ENCODE measurements at regions of chr3 and their contacts with region 1.

Region 1: DNA sequence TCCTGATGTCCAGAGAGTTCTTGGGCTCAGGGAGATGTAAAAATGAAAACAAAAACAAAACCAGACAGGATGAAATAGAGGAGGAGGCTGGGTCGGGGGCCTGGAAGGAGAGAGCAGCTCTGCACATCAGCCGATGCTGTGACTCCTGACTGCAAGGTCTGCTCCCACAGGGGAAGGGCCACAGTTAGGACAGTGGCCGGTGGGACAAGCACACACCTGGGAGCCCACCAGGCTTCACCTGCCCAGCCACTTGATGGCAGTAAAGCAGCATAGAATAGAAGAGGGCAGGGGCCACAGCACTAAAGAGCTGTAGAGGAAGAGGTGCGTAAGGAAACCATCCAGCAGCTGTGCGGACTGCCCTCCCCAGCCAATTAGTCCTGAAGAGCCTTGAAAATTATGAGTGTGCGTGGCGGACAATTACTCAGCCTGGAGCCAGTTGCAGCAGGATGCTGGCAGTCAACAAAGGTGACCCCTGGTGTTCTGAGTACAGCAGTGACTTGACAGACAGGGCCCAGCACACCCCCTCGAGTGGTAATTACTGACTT is 29.8 kb downstream of the ALS2CL start:
- DNase-seq: peak in 4 of 5 donors; percentile 17 to 64 (median 40)
- ATAC-seq: peak; percentile 7 to 45 (median 17)
- H3K4me3 ChIP-seq: no peak overlapping the region
- H3K27ac ChIP-seq: peak overlapping the region; percentile 47 to 93 (median 79)
- H3K4me1 ChIP-seq: peaks cover 0 to 83% (median 44%) of the 10 kb centered on the region in 12 donors
- H3K27me3 ChIP-seq: no peaks in the 10 kb centered on the region
- CTCF ChIP-seq: peak in 11 of 12 donors; percentile 25 to 57 (median 38)
- POLR2A ChIP-seq: no peak

Region 2: GRCh38 chr3:46566036-46566641 is 97.5 kb before region 1 on chr3 and contains the start of gene LRRC2:
- intact Hi-C with region 1: loop called in 1 of 10 experiments (anchors 10 kb)
- DNase-seq: peak; percentile 73 to 87 (median 77)
- ATAC-seq: peak; percentile 58 to 82 (median 76)
- H3K4me3 ChIP-seq: peak within 1 kb of the TSS; percentile 21 to 72 (median 66)
- H3K27ac ChIP-seq: peak within 1 kb of the TSS; percentile 80 to 99 (median 92)
- H3K4me1 ChIP-seq: peaks cover 0 to 38% (median 12%) of the 10 kb centered on the region in 12 donors
- H3K27me3 ChIP-seq: peaks cover 0 to 24% (median 0%) of the 10 kb centered on the region in 9 donors
- CTCF ChIP-seq: no peak
- POLR2A ChIP-seq: peak in 1 of 2 donors; percentile 19
- total RNA-seq, gene LRRC2: 74.4 to 147 (median 97.3) TPM

Region 3: GRCh38 chr3:46695962-46696894 is 32.6 kb after region 1 on chr3:
- intact Hi-C with region 1: loop called in 1 of 10 experiments (anchors 2 kb)
- DNase-seq: peak; percentile 78 to 92 (median 85)
- ATAC-seq: peak; percentile 73 to 83 (median 79)
- H3K4me3 ChIP-seq: no peak overlapping the region
- H3K27ac ChIP-seq: peak overlapping the region; percentile 85 to 98 (median 94)
- H3K4me1 ChIP-seq: peaks cover 31 to 86% (median 78%) of the 10 kb centered on the region in 12 donors
- H3K27me3 ChIP-seq: peaks cover 0 to 5% (median 0%) of the 10 kb centered on the region in 9 donors
- CTCF ChIP-seq: peak in 6 of 12 donors; percentile 7 to 35 (median 24)
- POLR2A ChIP-seq: no peak

Region 4: DNA sequence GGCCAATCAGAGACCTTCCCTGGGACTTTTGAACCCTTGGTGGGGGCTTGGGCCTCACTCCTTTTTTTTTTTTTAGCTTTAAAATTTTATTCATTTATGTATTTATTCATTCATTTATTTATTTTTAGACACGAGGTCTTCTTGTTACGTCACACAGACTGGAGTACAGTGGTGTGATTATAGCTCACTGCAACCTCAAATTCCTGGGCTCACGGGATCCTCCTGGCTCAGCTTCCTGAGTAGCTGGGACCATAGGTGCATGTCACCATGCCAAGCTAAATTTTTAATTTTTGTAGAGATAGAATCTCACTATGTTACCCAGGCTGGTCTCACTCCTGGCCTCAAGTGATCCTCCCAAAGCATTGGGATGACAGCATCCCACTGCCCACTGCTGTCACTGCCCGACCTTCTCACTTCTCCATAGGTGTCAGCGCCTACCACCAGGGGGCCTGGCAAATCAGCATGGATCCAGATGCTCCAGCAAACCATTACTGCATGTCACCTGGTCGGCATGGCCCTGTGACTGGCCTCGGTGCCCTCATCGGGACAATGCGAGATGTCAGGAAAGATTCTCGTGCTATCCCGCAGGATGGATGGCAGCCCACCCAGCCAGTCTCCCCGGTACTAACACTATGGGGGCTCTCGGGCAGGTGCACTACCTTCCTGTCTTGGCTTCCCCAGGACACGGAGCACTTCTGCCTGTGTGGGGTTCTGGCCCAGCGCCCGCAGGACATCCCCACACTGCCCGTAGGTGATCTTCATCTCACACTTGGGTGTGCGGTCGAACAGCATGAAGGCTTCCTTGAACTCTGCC is 196.6 kb after region 1 on chr3:
- intact Hi-C with region 1: loop called in 1 of 10 experiments (anchors 5 kb)
- DNase-seq: peak; percentile 48 to 64 (median 55)
- ATAC-seq: peak in 1 of 4 donors; percentile 0
- H3K4me3 ChIP-seq: peak overlapping the region; percentile 44 to 86 (median 64)
- H3K27ac ChIP-seq: peak overlapping the region; percentile 83 to 100 (median 96)
- H3K4me1 ChIP-seq: peaks cover 0 to 48% (median 4%) of the 10 kb centered on the region in 12 donors
- H3K27me3 ChIP-seq: no peaks in the 10 kb centered on the region
- CTCF ChIP-seq: peak; percentile 16 to 59 (median 34)
- POLR2A ChIP-seq: no peak

Region 5: GRCh38 chr3:46895204-46895660 is 231.6 kb after region 1 on chr3:
- intact Hi-C with region 1: loop called in 1 of 10 experiments (anchors 5 kb)
- DNase-seq: peak; percentile 68 to 87 (median 78)
- ATAC-seq: peak in 3 of 4 donors; percentile 22 to 63 (median 52)
- H3K4me3 ChIP-seq: no peak overlapping the region
- H3K27ac ChIP-seq: no peak overlapping the region
- H3K4me1 ChIP-seq: peaks cover 0 to 49% (median 26%) of the 10 kb centered on the region in 12 donors
- H3K27me3 ChIP-seq: peaks cover 0 to 22% (median 0%) of the 10 kb centered on the region in 9 donors
- CTCF ChIP-seq: peak; percentile 87 to 96 (median 91)
- POLR2A ChIP-seq: no peak

Measured in heart left ventricle (tissue), 16 donors.